Natural killer cell (primary cell): ENCODE measurements at regions of chr3 and their contacts with region 1.

Region 1: DNA sequence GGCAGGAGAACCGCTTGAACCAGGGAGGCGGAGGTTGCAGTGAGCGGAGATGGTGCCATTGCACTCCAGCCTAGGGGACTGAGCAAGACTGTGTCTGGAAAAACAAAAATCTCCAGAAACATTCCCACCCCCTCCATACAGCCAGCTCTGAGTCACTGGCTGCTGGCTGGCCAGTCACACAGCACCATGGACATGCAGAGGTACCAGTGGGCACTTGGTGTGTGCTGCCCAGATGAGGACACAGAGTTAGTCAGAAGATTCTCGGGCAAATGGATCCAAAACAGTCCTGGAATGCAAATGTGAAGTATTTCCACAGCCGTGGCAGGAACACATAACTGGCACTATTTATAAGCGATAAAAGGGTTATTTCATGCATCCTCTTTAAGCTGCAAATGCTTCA is 44.6 kb downstream of the BDH1 start:
- DNase-seq: no peak
- ATAC-seq: no peak
- H3K4me3 ChIP-seq: no peak overlapping the region
- H3K4me3 Mint-ChIP-seq: no peak overlapping the region
- H3K27ac ChIP-seq: no peak overlapping the region
- H3K27ac Mint-ChIP-seq: no peak overlapping the region
- H3K4me1 ChIP-seq: peaks cover 10% of the 10 kb centered on the region
- H3K4me1 Mint-ChIP-seq: peaks cover 7 to 8% of the 10 kb centered on the region in 2 donors
- H3K27me3 ChIP-seq: peaks cover 3% of the 10 kb centered on the region
- H3K27me3 Mint-ChIP-seq: no peaks in the 10 kb centered on the region
- CTCF ChIP-seq: no peak

Region 2: DNA sequence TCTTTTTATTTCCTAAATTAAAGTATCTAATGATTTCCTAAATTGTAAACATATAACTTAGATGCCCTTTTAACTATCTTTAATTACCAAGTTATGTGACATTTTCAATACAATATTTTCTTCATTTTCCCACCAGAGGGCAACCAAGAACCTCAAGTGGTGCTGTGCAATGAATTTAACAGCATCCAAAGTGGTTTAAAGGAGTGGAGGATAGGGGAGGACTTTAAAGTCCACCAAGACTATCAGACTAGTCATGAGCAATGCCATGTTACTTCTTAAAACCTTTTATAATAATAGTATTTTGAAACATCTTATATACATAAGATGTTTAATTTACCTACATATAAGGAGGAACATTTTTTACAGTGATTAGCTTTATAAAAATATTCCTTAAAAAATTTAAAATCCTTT is 287.1 kb before region 1 on chr3:
- intact Hi-C with region 1: loop called (anchors 1 kb)
- DNase-seq: peak in 1 of 2 donors; percentile 64
- ATAC-seq: peak in 2 of 3 donors; percentile 24 to 48
- H3K4me3 ChIP-seq: no peak overlapping the region
- H3K4me3 Mint-ChIP-seq: no peak overlapping the region
- H3K27ac ChIP-seq: no peak overlapping the region
- H3K27ac Mint-ChIP-seq: no peak overlapping the region
- H3K4me1 ChIP-seq: no peaks in the 10 kb centered on the region
- H3K4me1 Mint-ChIP-seq: peaks cover 20% of the 10 kb centered on the region in 2 donors
- H3K27me3 ChIP-seq: no peaks in the 10 kb centered on the region
- H3K27me3 Mint-ChIP-seq: no peaks in the 10 kb centered on the region
- CTCF ChIP-seq: peak; percentile 65

Region 3: DNA sequence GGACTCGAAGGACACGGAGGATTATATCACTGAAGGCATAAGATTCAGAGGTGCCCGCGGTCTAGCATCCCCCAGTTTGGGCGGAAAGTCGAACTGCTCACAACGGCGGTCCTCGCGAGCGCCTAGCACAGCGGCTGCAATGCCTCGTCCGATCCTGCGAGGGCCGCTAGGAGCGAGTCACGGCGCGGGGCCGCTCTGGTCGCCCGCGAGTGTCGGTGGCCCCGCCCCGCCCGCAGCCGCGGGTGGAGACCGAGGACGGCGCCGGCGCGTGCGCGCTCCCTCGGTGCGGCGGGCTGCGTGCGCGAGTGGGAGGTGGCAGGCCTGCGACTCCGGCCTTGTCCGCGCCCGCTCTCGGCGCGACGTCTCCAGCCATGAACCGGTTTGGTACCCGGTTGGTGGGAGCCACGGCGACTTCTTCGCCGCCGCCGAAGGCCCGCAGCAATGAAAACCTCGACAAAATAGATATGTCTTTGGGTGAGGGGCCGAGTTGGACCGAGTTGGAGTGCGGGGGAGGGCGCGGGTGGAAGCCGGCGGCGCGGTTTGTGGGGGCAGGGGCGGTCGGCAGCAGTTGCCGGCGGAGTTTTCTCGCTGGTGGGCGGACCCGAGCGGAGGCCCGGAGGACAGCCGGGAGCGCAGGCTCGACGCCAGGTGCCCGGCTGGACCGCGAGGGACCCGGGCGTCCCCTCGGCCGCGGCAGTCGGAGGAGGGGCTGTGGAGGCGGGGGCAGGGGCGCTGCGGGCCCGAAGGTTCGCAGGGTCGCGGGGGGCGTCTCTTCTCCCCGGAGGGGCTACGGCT is 238.7 kb after region 1 on chr3 and contains the start of gene FYTTD1:
- intact Hi-C with region 1: no loop called
- DNase-seq: peak; percentile 89 to 95
- ATAC-seq: peak; percentile 83 to 93 (median 89)
- H3K4me3 ChIP-seq: peak within 1 kb of the TSS; percentile 86
- H3K4me3 Mint-ChIP-seq: peak within 1 kb of the TSS; percentile 97
- H3K27ac ChIP-seq: peak within 1 kb of the TSS; percentile 91
- H3K27ac Mint-ChIP-seq: peak within 1 kb of the TSS; percentile 87 to 90
- H3K4me1 ChIP-seq: peaks cover 16% of the 10 kb centered on the region
- H3K4me1 Mint-ChIP-seq: peaks cover 41 to 48% of the 10 kb centered on the region in 2 donors
- H3K27me3 ChIP-seq: no peaks in the 10 kb centered on the region
- H3K27me3 Mint-ChIP-seq: no peaks in the 10 kb centered on the region
- CTCF ChIP-seq: peak; percentile 47
- total RNA-seq, gene FYTTD1: 58.0 to 75.6 (median 72.2) TPM